ENCODE measurements at regions of chr4 and their contacts with region 1.

Region 1: DNA sequence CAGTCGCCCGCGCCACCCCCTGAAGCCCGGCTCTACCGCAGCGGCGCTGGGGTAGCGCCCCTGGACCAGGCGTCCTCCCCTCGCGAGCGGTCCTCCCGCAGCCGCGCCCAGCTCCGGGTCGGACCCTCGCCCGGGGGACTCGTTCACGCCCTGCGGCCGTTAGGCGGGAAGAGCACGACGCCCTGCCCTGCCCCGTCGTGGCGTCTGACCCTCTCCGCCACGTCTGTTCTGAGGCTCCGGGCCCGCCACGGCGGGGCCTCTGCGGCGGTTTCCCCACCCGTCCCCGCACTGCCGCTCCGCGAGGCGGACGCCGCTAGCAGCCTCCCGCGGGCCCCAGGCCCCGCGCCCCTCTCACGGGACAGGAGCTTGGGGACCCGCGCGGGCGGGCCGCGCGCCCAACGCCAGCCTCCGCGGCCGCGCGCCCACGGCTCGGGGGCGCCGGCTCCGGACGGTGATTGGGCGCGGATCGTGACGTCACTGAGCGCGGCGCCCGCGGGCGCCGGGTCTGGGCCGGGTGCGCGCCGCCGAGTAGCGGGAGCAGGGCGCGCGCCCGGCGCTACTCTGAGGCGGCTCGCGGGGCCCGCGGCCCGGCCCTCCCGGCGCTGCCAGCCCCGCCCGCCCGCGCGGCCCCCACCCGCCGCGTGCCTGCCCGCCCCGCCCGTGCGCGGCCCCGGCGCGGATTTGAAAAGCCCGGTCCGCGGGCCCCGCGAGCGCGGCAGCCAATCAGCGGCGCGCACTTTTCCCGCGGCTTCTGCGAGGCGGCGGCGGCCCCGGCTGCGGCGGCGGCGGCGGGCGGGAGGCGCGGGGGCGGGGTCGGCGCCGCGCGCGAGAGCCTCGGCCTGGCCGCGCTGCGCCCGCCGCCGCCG is at the start of gene NSD2:
- DNase-seq: peak; percentile 90
- H3K4me3 Mint-ChIP-seq: peak within 1 kb of the TSS; percentile 99
- H3K27ac Mint-ChIP-seq: peak within 1 kb of the TSS; percentile 99
- H3K4me1 Mint-ChIP-seq: peaks cover 48% of the 10 kb centered on the region
- H3K27me3 Mint-ChIP-seq: no peaks in the 10 kb centered on the region
- total RNA-seq, gene NSD2: 235 to 248 TPM

Region 2: DNA sequence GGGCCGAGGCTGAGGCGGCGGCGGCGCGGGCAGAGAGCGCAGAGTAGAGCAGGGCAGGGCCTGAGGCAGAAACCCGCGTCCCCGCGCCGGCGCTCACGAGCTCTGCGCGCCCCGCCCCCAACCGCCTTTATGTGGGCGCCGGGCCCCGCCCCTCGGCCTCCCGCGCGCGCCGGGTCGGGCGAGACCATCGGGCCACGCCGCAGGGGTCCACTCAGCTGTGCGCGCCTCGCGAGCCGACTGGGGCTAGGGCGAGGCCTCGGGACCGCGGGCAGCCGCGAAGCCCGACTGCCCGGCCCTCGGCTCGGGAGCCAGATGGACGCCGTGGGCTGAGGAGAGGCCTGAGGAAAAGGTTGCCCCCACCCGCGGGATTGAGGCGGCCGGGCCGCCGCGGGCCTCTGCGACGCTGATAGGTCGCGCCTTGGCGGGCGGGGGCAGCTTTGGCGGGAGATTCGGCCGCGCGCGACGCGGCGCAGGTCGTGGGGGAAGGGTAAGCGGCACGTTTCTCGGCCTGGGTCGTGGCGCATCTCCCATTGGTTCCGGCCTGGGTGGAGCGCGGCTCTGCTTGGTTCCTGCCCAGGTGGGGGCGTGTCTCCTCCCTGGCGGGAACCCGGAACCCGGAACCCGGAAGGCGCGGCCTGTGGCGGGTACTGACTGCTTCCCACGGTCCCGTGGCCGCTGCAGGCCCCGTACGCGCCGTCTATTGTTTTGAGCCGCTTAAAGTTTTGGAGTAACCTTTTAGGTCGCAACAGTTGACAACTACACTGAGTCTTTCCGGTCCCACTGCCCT is 158.4 kb before region 1 on chr4 and contains the start of gene SLBP:
- CTCF ChIA-PET with region 1: no interaction called
- POLR2A ChIA-PET with region 1: interaction called, 27 read pairs
- DNase-seq: peak; percentile 99
- H3K4me3 Mint-ChIP-seq: peak within 1 kb of the TSS; percentile 99
- H3K27ac Mint-ChIP-seq: peak within 1 kb of the TSS; percentile 96
- H3K4me1 Mint-ChIP-seq: peaks cover 67% of the 10 kb centered on the region
- H3K27me3 Mint-ChIP-seq: no peaks in the 10 kb centered on the region
- total RNA-seq, gene SLBP: 105 to 107 TPM

Region 3: GRCh38 chr4:1721004-1721665 is 149.7 kb before region 1 on chr4 and contains the starts of genes TACC3 and TMEM129:
- CTCF ChIA-PET with region 1: no interaction called
- POLR2A ChIA-PET with region 1: interaction called, 19 read pairs
- DNase-seq: peak; percentile 96
- H3K4me3 Mint-ChIP-seq: peak within 1 kb of the TSS; percentile 98
- H3K27ac Mint-ChIP-seq: peak within 1 kb of the TSS; percentile 99
- H3K4me1 Mint-ChIP-seq: peaks cover 58% of the 10 kb centered on the region
- H3K27me3 Mint-ChIP-seq: no peaks in the 10 kb centered on the region
- total RNA-seq, gene TACC3: 213 TPM
- total RNA-seq, gene TMEM129: 20.4 to 22.3 TPM

Region 4: GRCh38 chr4:1856042-1856788 is 14.6 kb before region 1 on chr4 and contains the start of gene LETM1:
- CTCF ChIA-PET with region 1: interaction called, 11 read pairs
- POLR2A ChIA-PET with region 1: interaction called, 100 read pairs
- DNase-seq: peak; percentile 96
- H3K4me3 Mint-ChIP-seq: peak within 1 kb of the TSS; percentile 81
- H3K27ac Mint-ChIP-seq: peak within 1 kb of the TSS; percentile 66
- H3K4me1 Mint-ChIP-seq: peaks cover 37% of the 10 kb centered on the region
- H3K27me3 Mint-ChIP-seq: no peaks in the 10 kb centered on the region
- total RNA-seq, gene LETM1: 36.6 to 39.3 TPM

Region 5: GRCh38 chr4:1883583-1883982 is 12.8 kb after region 1 on chr4:
- CTCF ChIA-PET with region 1: interaction called, 10 read pairs
- POLR2A ChIA-PET with region 1: interaction called, 16 read pairs
- DNase-seq: no peak
- H3K4me3 Mint-ChIP-seq: no peak overlapping the region
- H3K27ac Mint-ChIP-seq: no peak overlapping the region
- H3K4me1 Mint-ChIP-seq: peaks cover 60% of the 10 kb centered on the region
- H3K27me3 Mint-ChIP-seq: no peaks in the 10 kb centered on the region

Region 6: DNA sequence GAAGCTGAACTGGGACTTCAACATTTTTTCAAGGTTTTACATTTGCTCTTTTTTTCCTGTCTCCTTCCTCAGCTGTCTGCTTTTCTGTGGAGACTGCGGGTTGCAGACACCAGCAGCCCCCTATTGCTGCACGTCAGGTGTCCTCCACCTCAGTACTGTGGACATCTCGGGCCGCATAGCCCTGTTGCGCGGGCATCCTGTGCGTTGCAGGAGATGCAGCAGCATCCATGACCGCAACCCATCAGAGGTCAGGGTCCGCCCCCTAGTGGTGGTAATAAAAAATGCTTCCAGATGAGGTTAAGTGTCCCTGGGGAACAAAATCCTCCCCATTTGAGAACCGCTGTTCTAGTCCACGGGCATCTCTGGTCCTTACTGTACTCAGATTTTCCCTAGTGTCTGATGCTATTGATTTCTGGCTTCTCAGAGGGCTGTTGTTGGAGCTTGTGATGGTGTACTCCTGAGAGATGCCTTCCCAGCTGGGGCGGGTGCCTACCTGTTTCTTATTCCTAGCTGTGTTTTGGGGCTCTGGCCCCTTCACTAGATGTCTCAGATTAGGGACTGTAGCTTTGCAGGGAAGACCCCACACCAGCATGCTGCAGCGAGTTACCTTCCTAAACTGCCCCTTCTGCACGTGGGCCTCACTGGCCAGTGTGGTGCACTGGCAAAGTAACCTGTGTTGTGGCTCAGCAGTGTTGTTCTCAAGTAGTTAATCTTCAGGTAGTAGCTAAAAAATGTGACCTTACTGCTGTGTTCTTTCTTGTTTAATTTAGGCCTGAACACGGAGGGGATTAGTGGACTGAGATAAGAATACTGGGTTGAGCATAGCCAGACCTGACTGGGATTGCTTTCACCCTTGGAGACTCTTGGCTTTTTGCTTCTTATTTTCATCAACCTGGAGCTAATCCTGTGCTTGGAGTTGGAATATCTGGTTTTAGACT is 28.6 kb after region 1 on chr4:
- CTCF ChIA-PET with region 1: interaction called, 47 read pairs
- POLR2A ChIA-PET with region 1: interaction called, 22 read pairs
- DNase-seq: peak; percentile 79
- H3K4me3 Mint-ChIP-seq: no peak overlapping the region
- H3K27ac Mint-ChIP-seq: peak overlapping the region; percentile 86
- H3K4me1 Mint-ChIP-seq: peaks cover 74% of the 10 kb centered on the region
- H3K27me3 Mint-ChIP-seq: no peaks in the 10 kb centered on the region

Region 7: GRCh38 chr4:1910643-1911042 is 39.8 kb after region 1 on chr4:
- CTCF ChIA-PET with region 1: interaction called, 3 read pairs
- POLR2A ChIA-PET with region 1: interaction called, 13 read pairs
- DNase-seq: peak; percentile 32
- H3K4me3 Mint-ChIP-seq: no peak overlapping the region
- H3K27ac Mint-ChIP-seq: peak overlapping the region; percentile 7
- H3K4me1 Mint-ChIP-seq: peaks cover 52% of the 10 kb centered on the region
- H3K27me3 Mint-ChIP-seq: no peaks in the 10 kb centered on the region

Region 8: GRCh38 chr4:1939664-1940509 is 69.1 kb after region 1 on chr4:
- CTCF ChIA-PET with region 1: no interaction called
- POLR2A ChIA-PET with region 1: no interaction called
- DNase-seq: no peak
- H3K4me3 Mint-ChIP-seq: no peak overlapping the region
- H3K27ac Mint-ChIP-seq: no peak overlapping the region
- H3K4me1 Mint-ChIP-seq: peaks cover 2% of the 10 kb centered on the region
- H3K27me3 Mint-ChIP-seq: no peaks in the 10 kb centered on the region